Right ventricle myocardium superior (tissue), 1 donor: ENCODE measurements at regions of chr11 and their contacts with region 1.

Region 1: DNA sequence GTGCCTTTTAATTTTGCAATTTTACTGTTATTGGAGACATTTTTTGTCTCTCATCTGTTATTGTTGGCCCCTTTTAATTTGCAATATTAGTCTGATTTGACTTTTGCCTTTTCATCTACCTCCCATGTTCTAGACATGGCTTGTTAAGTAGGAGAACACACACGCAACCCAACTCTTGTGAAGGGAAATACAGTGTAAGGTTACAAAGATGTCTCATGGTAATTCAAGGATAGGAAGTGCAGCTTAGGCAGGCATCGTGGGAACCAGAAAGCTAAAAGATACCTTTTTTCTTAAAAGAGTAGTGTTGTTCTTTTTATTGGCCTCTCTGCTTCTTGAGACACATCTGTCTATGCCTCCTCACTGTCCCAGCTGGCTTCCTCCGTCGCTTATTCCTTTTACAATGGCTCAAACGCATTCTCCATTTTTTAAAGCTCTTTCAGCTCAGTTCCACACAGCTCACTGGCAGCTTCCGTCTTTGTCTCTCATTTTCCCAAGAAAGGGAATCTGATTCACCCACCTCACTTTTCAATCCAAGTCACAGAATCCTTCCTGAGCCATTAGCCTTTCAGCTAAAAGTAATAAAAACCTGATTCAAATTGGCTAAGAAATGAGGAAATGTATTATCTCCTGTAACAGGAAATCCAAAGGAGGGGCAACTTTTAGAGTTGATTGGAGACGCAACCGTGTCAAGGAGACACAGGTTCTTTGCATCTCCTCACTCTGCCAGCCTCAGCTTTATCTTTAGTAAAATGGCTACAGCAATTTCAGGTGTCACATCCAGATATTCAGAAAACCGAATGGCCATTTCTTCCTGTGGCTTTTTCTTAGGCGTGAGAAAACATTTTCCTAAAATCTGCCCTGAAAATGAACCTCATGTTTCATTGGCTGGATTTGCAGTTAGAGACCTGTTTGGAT is 57.2 kb downstream of the SIK2 start:
- DNase-seq: no peak
- ATAC-seq: no peak

Region 2: DNA sequence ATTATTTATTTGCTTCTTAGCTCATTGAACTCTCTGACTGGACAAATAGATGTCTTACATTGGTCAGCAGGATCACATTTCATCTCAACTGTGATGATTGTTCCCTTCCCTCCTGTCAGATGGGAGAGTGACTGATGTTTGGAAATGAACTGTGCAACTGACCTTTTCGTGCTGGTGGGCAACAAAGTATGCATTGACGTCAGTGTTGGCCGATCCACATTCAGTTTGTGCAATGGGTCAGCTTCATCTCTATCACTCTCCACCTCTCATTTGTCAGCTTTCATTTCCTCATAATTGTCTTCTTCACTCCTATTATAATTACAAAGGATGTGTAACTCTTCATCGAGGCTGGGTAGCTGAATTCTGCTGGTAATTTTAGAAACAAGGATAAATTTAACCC is 35.4 kb after region 1 on chr11:
- intact Hi-C with region 1: loop called (anchors 5 kb)
- DNase-seq: peak; percentile 37
- ATAC-seq: peak; percentile 28